Left ventricle myocardium superior (tissue), 1 donor: ENCODE measurements at regions of chr11 and their contacts with region 1.

Region 1: DNA sequence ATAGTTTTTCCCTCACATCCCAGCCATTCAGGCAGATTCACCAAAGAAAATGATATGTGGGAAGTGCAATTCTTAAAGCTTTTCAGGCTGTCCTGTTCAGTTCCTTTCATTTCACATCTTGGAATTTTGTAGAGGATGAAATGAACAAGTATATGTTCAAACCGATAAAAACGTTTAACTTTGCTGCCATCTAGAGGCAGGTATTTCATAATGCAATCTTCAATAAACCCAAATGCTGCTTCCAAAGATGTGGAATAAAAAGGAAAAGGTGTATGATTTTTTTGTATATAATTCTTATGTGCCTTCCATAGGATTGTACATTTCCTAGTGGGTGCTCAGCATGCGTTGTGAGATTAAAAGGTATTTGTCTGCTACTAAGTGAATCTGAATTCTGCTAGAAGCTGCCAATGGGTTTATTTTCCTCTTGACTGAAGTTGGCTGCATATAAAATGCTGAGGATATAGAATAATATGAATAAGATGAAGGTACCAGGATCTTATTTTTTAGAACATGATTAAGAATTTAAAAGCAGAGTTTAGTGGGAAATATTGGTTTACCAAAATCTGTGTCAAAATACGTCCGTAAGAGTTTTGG is 199.3 kb downstream of the PGR start:
- DNase-seq: no peak
- ATAC-seq: peak; percentile 48

Region 2: DNA sequence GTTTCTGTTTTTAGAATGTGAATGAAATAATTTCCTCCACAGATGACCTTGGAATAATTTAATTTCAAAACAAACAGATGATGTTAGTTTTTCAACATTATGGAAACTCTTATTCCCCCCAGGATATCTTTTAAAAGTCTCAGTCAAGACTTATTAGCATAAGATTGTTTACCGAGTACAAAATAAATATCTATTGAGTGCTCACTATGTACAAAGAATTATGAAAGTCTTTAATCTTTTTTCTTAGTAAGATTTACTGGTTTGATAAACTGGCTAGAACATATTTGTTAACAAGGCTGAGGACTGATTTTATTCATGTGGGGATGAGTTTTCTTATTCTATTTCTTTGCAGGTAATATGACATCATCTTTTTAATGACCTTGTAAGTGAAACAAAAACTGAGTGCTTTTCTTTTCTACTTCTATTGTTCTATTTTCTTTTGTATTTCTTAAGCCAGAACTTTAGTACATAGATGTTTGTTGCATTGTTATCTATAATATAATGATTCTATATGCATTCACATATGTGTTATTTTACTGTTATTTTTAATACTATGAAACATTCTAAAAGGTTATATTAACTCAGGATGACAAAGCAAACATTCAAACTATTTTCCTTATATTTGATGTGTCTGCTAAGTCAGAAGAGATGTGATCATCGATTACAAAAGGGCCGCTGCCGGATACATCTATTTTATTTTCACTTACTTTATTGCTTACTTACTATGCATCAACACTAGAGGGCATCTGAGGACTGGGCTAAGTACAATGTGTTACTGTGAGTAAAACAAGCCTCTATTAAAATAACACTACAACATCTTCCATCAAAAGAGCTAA is 354.2 kb before region 1 on chr11:
- intact Hi-C with region 1: loop called (anchors 2 kb)
- DNase-seq: no peak
- ATAC-seq: peak; percentile 77

Region 3: GRCh38 chr11:101034076-101034475 is 103.8 kb after region 1 on chr11:
- intact Hi-C with region 1: no loop called
- DNase-seq: peak; percentile 70
- ATAC-seq: peak; percentile 96